Stomach (tissue), 19 donors: ENCODE measurements at regions of chr14 and their contacts with region 1.

Region 1: GRCh38 chr14:72516936-72517700 is 376.8 kb downstream of the DPF3 start:
- DNase-seq: peak; percentile 64 to 91
- H3K4me3 ChIP-seq: no peak overlapping the region
- H3K27ac ChIP-seq: no peak overlapping the region
- H3K4me1 ChIP-seq: peaks cover 0 to 12% (median 5%) of the 10 kb centered on the region in 4 donors
- H3K27me3 ChIP-seq: peaks cover 0 to 15% (median 0%) of the 10 kb centered on the region in 3 donors
- CTCF ChIP-seq: peak in 6 of 7 experiments; percentile 75 to 92 (median 85)
- EP300 ChIP-seq: no peak
- POLR2A ChIP-seq: no peak

Region 2: GRCh38 chr14:72608391-72609204 is 91.5 kb after region 1 on chr14:
- intact Hi-C with region 1: no loop called
- DNase-seq: no peak
- H3K4me3 ChIP-seq: no peak overlapping the region
- H3K27ac ChIP-seq: no peak overlapping the region
- H3K4me1 ChIP-seq: peaks cover 0 to 7% (median 5%) of the 10 kb centered on the region in 4 donors
- H3K27me3 ChIP-seq: peaks cover 0 to 4% (median 0%) of the 10 kb centered on the region in 3 donors
- CTCF ChIP-seq: no peak
- EP300 ChIP-seq: no peak
- POLR2A ChIP-seq: no peak

Region 3: GRCh38 chr14:72904840-72905561 is 387.9 kb after region 1 on chr14:
- intact Hi-C with region 1: loop called (anchors 5 kb)
- DNase-seq: peak; percentile 59 to 88
- H3K4me3 ChIP-seq: no peak overlapping the region
- H3K27ac ChIP-seq: no peak overlapping the region
- H3K4me1 ChIP-seq: peaks cover 0 to 17% (median 7%) of the 10 kb centered on the region in 4 donors
- H3K27me3 ChIP-seq: no peaks in the 10 kb centered on the region
- CTCF ChIP-seq: peak in 5 of 7 experiments; percentile 71 to 91 (median 88)
- EP300 ChIP-seq: no peak
- POLR2A ChIP-seq: no peak